ENCODE measurements at regions of chr3 and their contacts with region 1.

Region 1: GRCh38 chr3:132641837-132642538 is 17.6 kb downstream of the ACAD11 start:
- DNase-seq: peak; percentile 80

Region 2: DNA sequence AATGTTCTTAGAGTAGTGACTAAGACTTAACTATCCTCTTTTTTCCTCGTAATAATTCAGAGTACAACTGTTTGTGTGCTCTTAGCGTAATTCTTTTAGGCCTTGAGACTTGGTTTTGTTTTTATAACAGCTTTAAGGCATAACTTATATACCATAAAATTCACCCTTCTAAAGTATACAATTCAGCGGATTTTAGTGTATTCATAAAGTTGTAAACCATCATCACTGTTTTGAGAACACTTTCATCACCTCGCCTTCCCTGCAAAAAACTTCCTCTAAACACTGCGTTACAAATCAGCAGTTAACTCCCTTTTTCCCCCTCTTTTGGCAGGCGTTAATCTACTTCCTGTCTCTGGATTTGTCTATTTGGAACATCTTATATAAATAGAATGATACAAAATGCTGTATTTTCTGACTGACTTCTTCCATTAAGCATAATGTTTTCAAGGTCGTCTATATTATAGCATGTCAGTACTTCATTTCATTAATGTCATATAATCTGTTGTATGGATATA is 206.0 kb before region 1 on chr3:
- in situ Hi-C with region 1: no loop called
- DNase-seq: peak; percentile 42

Region 3: GRCh38 chr3:132535575-132536441 is 106.2 kb before region 1 on chr3:
- in situ Hi-C with region 1: loop called (anchors 25 kb)
- DNase-seq: peak; percentile 76

Region 4: DNA sequence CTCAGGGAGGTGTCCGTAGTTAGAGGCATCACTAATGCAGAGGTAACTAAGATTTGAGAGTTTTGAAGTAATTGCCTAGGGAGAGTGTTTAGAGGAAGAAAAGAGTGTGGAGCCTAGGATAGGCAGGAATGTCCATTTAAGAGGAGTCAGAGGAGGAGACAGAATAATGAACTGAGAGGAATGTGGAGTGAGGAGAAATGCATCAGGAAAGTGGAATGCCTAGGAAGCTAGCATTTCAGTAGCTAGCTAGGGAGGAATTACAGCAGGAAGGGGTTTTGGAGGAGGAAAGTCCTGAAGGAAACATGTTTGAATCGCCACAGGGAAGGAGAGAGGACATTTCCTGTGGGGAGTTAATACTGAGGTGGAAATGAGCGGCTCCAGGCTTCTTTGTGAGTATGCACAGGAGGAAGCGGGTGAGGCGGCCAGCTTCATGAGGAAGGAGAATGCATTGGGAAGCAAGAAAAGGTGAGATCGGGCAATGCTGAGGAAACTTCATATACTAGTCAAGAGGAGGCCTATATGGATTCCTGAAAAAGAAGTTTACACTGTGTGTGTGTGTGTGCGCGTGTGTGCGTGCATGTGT is 550.5 kb after region 1 on chr3:
- in situ Hi-C with region 1: no loop called
- DNase-seq: no peak